ENCODE measurements at regions of chr9 and their contacts with region 1.

Region 1: GRCh38 chr9:98074115-98074990 is 17.8 kb downstream of the NANS start:
- DNase-seq: peak; percentile 38 to 59
- ATAC-seq: peak in 6 of 8 donors; percentile 24 to 71 (median 62)
- H3K4me3 ChIP-seq: no peak overlapping the region
- H3K27ac ChIP-seq: peak overlapping the region in 1 of 10 donors; percentile 76
- H3K4me1 ChIP-seq: peaks cover 0 to 24% (median 9%) of the 10 kb centered on the region in 9 donors
- H3K27me3 ChIP-seq: no peaks in the 10 kb centered on the region
- CTCF ChIP-seq: peak; percentile 79 to 97 (median 94)

Region 2: GRCh38 chr9:98192503-98193335 is 118.4 kb after region 1 on chr9 and contains the start of gene CORO2A:
- intact Hi-C with region 1: loop called in 1 of 10 experiments (anchors 10 kb)
- DNase-seq: peak; percentile 57 to 74
- ATAC-seq: peak; percentile 80 to 92 (median 90)
- H3K4me3 ChIP-seq: peak within 1 kb of the TSS; percentile 46 to 79 (median 70)
- H3K27ac ChIP-seq: peak within 1 kb of the TSS in 6 of 10 donors; percentile 20 to 72 (median 40)
- H3K4me1 ChIP-seq: peaks cover 0 to 19% (median 6%) of the 10 kb centered on the region in 9 donors
- H3K27me3 ChIP-seq: peaks cover 0 to 9% (median 0%) of the 10 kb centered on the region in 7 donors
- CTCF ChIP-seq: peak in 7 of 9 donors; percentile 6 to 47 (median 36)
- total RNA-seq, gene CORO2A: 0.06 to 0.90 (median 0.22) TPM

Region 3: DNA sequence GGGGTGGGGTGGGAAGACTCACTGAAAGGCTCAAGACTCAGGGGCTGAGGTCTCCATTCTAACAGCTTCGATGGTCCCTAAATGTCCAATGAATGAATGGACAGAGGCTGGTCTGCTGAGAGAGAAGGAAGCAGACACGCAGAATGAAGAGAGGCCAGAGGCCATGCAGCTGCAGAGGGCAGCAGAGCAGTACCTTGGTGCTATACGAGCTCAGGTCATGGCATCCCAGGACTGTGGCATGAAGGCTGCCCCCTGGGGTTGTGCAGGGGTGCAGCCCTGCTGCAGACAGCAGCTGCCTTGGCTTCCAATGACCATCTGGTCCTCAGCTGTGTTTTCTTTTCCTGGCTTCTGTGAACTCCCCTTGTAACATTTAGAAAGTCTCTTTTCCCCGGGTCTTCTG is 133.3 kb after region 1 on chr9:
- intact Hi-C with region 1: loop called in 3 of 10 experiments (anchors 10 kb)
- DNase-seq: no peak
- ATAC-seq: no peak
- H3K4me3 ChIP-seq: no peak overlapping the region
- H3K27ac ChIP-seq: no peak overlapping the region
- H3K4me1 ChIP-seq: peaks cover 0 to 7% (median 0%) of the 10 kb centered on the region in 9 donors
- H3K27me3 ChIP-seq: no peaks in the 10 kb centered on the region
- CTCF ChIP-seq: no peak